ENCODE measurements at regions of chr15 and their contacts with region 1.

Region 1: DNA sequence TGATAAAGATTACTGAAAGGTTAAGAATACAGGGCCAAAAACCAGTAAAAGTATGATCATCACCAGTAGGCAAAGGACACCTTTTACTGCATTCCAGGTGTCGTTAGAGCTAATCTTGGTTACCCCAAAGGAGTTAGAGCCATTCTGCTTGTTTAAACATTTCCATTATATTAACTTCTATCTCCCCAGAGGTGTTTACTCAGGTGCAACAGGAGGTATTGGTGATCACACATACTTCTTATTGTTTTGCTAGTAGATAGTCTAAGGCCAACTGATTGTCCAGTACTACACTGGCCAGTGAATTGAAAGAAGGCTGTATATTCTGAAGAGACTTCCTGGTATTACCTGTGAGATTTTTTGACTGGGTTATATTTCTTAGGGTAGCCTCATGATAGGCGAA is 22.8 kb downstream of the MKRN3 start:
- DNase-seq: no peak
- H3K4me3 ChIP-seq: no peak overlapping the region
- H3K27ac ChIP-seq: no peak overlapping the region
- H3K27me3 ChIP-seq: peaks cover 0 to 21% (median 0%) of the 10 kb centered on the region in 45 donors
- CTCF ChIP-seq: no peak

Region 2: DNA sequence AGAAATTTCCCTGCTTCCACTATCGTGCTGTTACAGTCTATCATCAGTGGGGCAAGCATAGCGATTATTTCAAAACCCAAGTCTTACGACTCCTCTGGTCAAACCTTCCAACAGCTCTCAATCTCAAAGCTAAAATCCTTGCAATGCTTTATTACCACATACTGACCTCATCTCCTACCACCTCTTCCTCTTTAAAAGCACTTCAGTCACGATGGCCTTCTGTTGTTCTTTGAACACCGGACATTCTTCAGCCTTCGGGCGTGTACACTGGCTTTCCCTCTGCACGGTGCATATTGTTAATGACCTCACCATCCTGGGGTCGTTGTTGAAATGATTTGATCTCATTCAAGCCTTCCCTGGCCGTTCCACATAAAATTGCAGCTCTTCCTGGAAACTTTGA is 28.3 kb after region 1 on chr15:
- intact Hi-C with region 1: loop called in 1 of 2 experiments (anchors 2 kb)
- DNase-seq: no peak
- H3K4me3 ChIP-seq: no peak overlapping the region
- H3K27ac ChIP-seq: no peak overlapping the region
- H3K27me3 ChIP-seq: peaks cover 0 to 8% (median 0%) of the 10 kb centered on the region in 45 donors
- CTCF ChIP-seq: no peak

Region 3: DNA sequence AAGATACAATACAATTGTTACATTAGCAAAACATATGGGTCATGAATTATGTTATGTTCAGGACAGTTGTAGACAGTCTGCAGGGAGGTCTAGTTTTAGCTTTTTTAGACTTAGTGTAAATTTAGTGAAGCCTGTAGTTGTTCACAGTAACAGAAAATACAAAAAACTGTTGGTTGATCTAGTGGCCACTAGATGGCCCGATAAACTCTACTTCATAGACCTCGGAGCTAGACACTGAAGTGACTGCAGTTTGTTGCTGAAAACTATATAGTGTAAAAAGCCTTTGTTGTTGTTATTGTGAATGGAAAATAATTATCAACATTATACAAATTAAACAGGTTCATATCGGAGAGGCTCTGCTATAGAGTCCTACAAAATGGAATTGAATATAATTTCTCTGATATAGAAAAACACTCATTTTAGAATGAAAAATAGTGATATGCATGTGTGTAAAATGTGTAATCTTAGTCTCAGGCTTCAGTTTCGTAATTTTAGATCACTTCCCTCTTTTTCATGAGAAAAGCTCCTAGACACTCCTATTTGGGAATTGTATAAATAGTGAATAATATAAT is 41.1 kb after region 1 on chr15:
- intact Hi-C with region 1: no loop called
- DNase-seq: no peak
- H3K4me3 ChIP-seq: no peak overlapping the region
- H3K27ac ChIP-seq: no peak overlapping the region
- H3K27me3 ChIP-seq: peaks cover 0 to 59% (median 13%) of the 10 kb centered on the region in 45 donors
- CTCF ChIP-seq: peak; percentile 27 to 72 (median 60)

Region 4: GRCh38 chr15:24823473-24823872 is 1235.2 kb after region 1 on chr15:
- intact Hi-C with region 1: no loop called
- DNase-seq: peak; percentile 4 to 77 (median 56)
- H3K4me3 ChIP-seq: peak overlapping the region in 57 of 59 donors; percentile 6 to 60 (median 42)
- H3K27ac ChIP-seq: no peak overlapping the region
- H3K27me3 ChIP-seq: peaks cover 0 to 27% (median 4%) of the 10 kb centered on the region in 45 donors
- CTCF ChIP-seq: no peak

Measured in dorsolateral prefrontal cortex (tissue), 120 donors.